ENCODE measurements at regions of chr10 and their contacts with region 1.

Region 1: DNA sequence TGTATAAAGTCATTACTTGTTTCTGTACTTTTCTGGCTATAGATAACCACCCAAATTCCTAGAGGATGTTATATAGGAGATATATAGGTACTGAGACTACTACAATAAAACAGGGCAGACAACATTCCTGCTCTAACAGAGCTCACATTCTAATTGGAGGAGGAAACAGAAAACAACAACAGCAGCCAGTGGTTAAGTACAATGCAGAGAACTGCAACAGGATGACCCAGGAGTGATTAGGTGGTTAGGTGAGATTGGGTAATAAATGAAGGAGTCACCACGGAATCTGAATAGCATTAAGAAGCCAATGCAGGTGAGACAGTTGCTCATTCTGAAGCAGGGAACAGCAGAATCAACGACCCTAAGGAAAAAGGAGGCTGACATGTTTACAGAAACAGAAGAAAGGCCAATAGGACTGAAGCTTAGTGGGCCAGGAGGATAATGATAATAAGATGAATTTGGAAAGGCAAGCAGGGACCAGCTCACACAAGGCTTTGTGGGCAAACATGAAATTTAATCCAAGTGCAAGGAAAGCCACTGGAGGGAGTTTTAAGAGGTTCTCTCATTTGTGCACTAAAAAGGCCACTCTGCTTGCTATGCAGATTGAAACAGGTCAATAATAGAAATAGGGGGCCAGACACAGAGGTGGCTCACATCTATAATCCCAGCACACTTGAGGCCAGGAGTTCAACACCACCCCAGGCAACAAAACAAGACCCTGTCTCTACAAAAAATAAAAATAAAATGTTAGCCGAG is 16.9 kb upstream of the REEP3 start:
- DNase-seq: peak; percentile 67
- H3K4me3 Mint-ChIP-seq: peak overlapping the region; percentile 4
- H3K27ac Mint-ChIP-seq: peak overlapping the region; percentile 60
- H3K4me1 Mint-ChIP-seq: peaks cover 20% of the 10 kb centered on the region
- H3K27me3 Mint-ChIP-seq: no peaks in the 10 kb centered on the region
- CTCF ChIP-seq: no peak

Region 2: DNA sequence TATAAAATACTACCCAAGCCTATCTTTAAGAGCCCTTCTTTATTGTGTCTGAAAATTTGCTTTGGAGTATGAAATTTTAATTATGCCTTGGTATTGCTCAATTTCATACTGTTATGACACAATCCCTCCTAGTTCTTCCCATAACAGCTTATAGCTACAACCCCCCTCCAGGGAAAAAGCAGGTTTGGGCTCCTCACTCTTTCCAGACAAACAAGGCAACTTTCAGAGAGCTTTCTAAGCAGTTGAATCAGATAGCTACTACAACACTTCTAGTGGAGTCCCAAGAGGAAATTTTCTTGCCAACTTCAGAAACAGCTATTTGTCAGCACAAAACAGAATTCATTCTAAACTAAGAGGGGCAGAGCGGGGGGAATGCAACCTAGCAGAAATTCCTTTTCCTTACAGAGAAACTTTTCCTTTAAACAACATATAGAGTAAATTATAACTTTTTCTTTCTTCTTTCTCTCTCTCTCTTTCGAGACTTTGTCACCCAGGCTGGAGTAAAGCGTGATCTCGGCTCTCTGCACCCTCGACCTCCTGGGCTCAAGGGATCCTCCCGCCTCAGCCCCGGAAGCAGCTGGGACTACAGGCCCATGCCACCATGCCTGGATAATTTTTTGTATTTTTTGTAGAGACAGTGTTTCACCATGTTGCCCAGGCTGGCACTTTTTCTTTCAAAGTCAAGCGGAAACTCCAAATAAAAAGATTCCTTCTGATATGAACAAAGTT is 12.6 kb before region 1 on chr10:
- CTCF ChIA-PET with region 1: interaction called, 6 read pairs
- POLR2A ChIA-PET with region 1: interaction called, 33 read pairs
- intact Hi-C with region 1: no loop called
- DNase-seq: peak; percentile 91
- H3K4me3 Mint-ChIP-seq: peak overlapping the region; percentile 38
- H3K27ac Mint-ChIP-seq: peak overlapping the region; percentile 72
- H3K4me1 Mint-ChIP-seq: peaks cover 17% of the 10 kb centered on the region
- H3K27me3 Mint-ChIP-seq: no peaks in the 10 kb centered on the region
- CTCF ChIP-seq: no peak

Region 3: DNA sequence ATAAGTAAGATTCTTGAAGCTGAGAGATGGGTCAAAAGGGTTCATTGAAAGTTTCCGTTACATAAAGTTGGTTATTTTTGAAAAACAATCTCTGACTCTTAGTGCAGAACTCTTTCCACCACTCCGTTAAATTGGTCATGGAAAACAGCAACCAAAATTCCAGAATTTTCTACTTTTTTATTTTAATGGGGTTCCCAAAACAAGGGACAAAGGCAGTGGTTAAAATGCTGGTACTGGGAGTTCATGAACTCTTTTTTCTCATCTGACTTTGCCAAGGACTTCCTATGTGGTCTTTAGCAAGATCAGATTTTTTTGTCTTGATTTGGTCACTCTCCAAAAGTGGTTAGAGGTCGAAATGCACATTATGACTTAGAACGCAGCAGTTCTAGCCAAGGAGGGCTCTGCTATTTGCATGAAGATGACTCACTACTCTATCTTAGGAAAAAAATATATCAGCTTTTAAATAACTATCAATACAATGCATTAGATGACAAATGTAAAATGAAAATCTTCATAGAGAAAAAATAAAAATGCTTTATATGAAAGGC is 162.6 kb after region 1 on chr10:
- CTCF ChIA-PET with region 1: no interaction called
- POLR2A ChIA-PET with region 1: no interaction called
- intact Hi-C with region 1: no loop called
- DNase-seq: peak; percentile 73
- H3K4me3 Mint-ChIP-seq: no peak overlapping the region
- H3K27ac Mint-ChIP-seq: no peak overlapping the region
- H3K4me1 Mint-ChIP-seq: peaks cover 7% of the 10 kb centered on the region
- H3K27me3 Mint-ChIP-seq: no peaks in the 10 kb centered on the region
- CTCF ChIP-seq: no peak

Measured in MCF 10A (cell line).